Upper lobe of right lung (tissue), 1 donor: ENCODE measurements at regions of chr3 and their contacts with region 1.

Region 1: DNA sequence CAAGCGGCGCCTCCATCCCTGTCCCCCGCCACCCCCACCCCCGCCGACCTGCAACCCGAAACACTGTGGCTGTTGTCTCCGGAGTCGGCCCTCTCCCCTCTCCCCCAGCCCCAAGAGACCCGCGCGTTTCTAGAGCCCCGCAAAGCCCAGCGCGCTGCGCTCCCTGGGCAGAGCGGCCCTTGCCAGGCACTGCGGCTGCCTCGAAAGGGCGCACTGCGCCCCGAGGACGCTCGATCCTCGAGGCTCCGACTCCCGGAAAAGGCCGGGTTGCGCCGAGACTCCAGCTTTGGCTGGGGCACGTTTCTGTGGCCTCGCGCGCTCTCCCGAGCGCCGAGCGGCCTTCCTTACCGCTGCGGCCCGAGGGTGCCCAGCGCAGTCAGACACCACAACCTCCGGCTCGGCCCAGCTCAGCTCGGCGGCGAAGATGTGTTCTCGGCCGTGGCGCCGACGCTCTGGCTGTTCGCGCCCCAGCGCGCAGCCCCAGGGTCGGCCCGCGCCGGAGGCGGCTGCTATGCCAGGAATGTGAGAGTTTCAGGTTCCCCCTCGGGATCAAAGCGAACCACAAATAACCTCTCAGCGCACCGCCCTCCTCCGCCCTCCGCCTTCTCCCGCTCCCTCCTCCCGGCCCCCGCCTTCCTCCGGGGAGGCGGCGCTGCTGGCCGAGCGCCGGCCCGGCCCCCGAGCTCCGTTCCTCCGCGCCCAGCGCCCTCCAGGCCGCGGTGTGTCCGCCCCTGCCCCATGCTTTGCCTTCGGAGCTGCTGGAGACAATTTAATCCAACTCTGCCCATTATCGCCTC is at the start of gene AMOTL2:
- DNase-seq: peak; percentile 93
- ATAC-seq: peak; percentile 85
- H3K4me3 ChIP-seq: peak within 1 kb of the TSS; percentile 82
- H3K27ac ChIP-seq: peak within 1 kb of the TSS; percentile 97
- H3K4me1 ChIP-seq: peaks cover 43% of the 10 kb centered on the region
- H3K27me3 ChIP-seq: no peaks in the 10 kb centered on the region
- CTCF ChIP-seq: no peak
- total RNA-seq, gene AMOTL2: 119 TPM

Region 2: DNA sequence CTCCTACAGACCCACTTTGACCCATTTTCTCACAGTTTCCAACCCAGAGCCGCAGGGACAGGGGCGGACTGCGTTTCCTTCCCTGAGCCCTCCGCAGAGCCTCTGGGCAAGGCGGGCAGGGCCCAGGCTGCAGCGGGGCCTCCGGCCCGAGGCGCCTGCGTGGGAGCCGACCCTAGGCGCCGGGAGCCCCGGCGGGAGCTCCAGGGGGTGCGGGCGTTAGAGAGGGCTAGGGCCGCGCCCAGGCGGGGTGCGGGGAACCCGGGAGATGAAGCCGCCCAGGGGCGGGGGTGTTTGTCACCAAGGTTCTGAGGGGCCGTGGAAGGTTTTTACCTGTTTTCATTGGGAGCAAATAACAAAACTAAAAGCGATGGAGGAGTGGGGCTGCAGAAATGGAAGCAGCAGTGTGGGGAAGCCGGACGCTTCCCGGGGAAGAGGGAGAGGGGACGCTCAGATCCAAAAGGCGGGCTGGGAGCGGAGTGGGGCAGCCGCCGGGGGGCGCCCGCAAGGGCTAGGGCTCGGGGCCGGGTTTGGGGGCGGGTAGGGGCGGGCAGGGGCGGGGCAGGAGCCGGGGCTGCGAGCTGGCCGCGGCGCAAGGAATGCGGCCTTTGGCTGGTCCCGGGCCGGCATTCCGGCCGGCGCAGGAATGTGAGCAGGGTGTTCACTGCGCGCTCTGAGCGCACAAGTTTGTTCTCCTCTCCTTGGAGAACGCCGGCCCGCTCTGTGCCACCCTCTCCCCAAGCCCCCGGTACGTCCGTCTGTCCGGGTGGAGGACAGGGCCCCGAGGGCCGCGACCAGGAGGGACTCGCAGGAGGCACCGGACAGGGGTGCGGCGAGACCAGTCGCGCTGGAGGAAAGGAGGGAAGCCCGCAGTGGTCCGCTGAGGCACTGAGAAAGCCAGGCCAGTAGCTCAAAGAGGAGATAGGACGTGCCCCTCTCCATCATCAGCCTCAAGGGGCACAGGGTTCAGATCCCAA is 61.0 kb before region 1 on chr3:
- intact Hi-C with region 1: loop called (anchors 5 kb)
- DNase-seq: peak; percentile 88
- ATAC-seq: peak; percentile 71
- H3K4me3 ChIP-seq: peak overlapping the region; percentile 55
- H3K27ac ChIP-seq: peak overlapping the region; percentile 95
- H3K4me1 ChIP-seq: peaks cover 69% of the 10 kb centered on the region
- H3K27me3 ChIP-seq: no peaks in the 10 kb centered on the region
- CTCF ChIP-seq: peak; percentile 40

Region 3: GRCh38 chr3:134464064-134464697 is 90.0 kb after region 1 on chr3:
- intact Hi-C with region 1: loop called (anchors 10 kb)
- DNase-seq: no peak
- ATAC-seq: peak; percentile 34
- H3K4me3 ChIP-seq: no peak overlapping the region
- H3K27ac ChIP-seq: peak overlapping the region; percentile 79
- H3K4me1 ChIP-seq: peaks cover 23% of the 10 kb centered on the region
- H3K27me3 ChIP-seq: no peaks in the 10 kb centered on the region
- CTCF ChIP-seq: no peak